IMR-90 (cell line): ENCODE measurements at regions of chr15 and their contacts with region 1.

Region 1: DNA sequence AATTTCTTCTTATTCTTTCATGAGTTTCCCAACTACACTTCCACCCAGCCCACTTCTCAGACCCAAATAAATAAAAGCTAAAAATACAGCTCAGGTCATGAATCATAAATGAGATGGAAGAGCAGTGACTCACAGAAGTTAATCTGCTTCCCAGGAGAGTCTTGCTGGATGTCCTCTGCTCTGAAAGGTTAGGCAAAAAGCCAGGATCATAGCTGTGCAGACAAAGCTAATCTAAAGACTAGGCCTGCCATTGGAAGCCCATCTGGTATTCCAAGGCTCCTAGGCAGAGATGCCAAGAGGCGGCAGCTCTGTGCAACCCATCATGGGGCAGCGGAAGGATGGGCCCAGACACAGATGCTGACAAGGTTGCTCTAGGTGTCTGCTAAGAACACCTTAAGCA is 24.0 kb downstream of the SHC4 start:
- DNase-seq: peak; percentile 99
- ATAC-seq: peak; percentile 66
- H3K4me3 ChIP-seq: no peak overlapping the region
- H3K27ac ChIP-seq: peak overlapping the region; percentile 36
- H3K4me1 ChIP-seq: peaks cover 24% of the 10 kb centered on the region
- H3K27me3 ChIP-seq: no peaks in the 10 kb centered on the region
- CTCF ChIP-seq: no peak
- POLR2A ChIP-seq: peak; percentile 44; the same call in 1 of the 2 replicates
- RAD21 ChIP-seq: no peak; the same call in 1 of the 2 replicates

Region 2: DNA sequence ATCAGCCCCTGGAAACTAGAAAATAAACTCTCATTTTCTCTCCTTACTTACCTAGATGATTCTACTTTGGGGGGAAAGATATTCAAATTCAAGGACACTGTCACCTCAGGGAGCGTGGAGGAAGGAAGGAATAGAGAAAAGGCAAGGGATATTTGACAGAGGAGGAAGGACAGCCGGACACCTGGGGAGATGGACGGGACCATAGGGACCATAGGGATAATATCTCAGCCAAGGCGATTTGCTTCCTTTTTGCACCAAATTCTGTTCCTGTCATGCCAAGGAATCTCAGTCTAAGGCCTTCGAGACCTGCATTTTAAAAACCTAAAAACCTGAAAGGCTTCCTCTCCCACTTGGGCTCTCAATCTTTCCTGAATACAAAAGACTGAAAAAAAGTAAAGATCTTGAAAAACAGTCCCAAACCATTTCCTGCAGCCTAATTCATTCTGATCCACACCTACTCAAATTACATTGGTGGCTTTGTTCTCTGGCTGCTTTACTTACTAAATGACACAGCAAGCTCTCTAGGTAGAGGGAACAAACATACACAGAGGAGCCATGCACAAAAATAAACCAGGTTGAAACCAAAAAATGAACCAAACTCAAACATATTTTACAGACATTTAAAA is 892.8 kb before region 1 on chr15:
- CTCF ChIA-PET with region 1: no interaction called
- POLR2A ChIA-PET with region 1: no interaction called
- dilution Hi-C with region 1: no loop called
- in situ Hi-C with region 1: no loop called
- intact Hi-C with region 1: no loop called
- DNase-seq: no peak
- ATAC-seq: no peak
- H3K4me3 ChIP-seq: no peak overlapping the region
- H3K27ac ChIP-seq: no peak overlapping the region
- H3K4me1 ChIP-seq: no peaks in the 10 kb centered on the region
- H3K27me3 ChIP-seq: no peaks in the 10 kb centered on the region; the same call in 1 of the 2 replicates
- CTCF ChIP-seq: no peak
- POLR2A ChIP-seq: no peak
- RAD21 ChIP-seq: no peak

Region 3: GRCh38 chr15:48888836-48889235 is 50.9 kb before region 1 on chr15:
- CTCF ChIA-PET with region 1: no interaction called
- POLR2A ChIA-PET with region 1: no interaction called
- dilution Hi-C with region 1: no loop called
- in situ Hi-C with region 1: no loop called
- intact Hi-C with region 1: loop called (anchors 5 kb)
- DNase-seq: no peak
- ATAC-seq: peak; percentile 39
- H3K4me3 ChIP-seq: no peak overlapping the region
- H3K27ac ChIP-seq: peak overlapping the region; percentile 23
- H3K4me1 ChIP-seq: peaks cover 14% of the 10 kb centered on the region
- H3K27me3 ChIP-seq: no peaks in the 10 kb centered on the region
- CTCF ChIP-seq: no peak
- POLR2A ChIP-seq: no peak
- RAD21 ChIP-seq: no peak

Region 4: GRCh38 chr15:48992545-48992944 is 52.9 kb after region 1 on chr15:
- CTCF ChIA-PET with region 1: no interaction called
- POLR2A ChIA-PET with region 1: no interaction called
- dilution Hi-C with region 1: no loop called
- in situ Hi-C with region 1: no loop called
- intact Hi-C with region 1: no loop called
- DNase-seq: no peak
- ATAC-seq: no peak
- H3K4me3 ChIP-seq: no peak overlapping the region
- H3K27ac ChIP-seq: no peak overlapping the region
- H3K4me1 ChIP-seq: peaks cover 4% of the 10 kb centered on the region; the same call in 1 of the 2 replicates
- H3K27me3 ChIP-seq: no peaks in the 10 kb centered on the region
- CTCF ChIP-seq: no peak
- POLR2A ChIP-seq: no peak
- RAD21 ChIP-seq: no peak

Region 5: GRCh38 chr15:49370782-49371181 is 431.1 kb after region 1 on chr15:
- CTCF ChIA-PET with region 1: no interaction called
- POLR2A ChIA-PET with region 1: no interaction called
- dilution Hi-C with region 1: no loop called
- in situ Hi-C with region 1: no loop called
- intact Hi-C with region 1: no loop called
- DNase-seq: peak; percentile 39
- ATAC-seq: no peak
- H3K4me3 ChIP-seq: no peak overlapping the region
- H3K27ac ChIP-seq: no peak overlapping the region
- H3K4me1 ChIP-seq: no peaks in the 10 kb centered on the region
- H3K27me3 ChIP-seq: no peaks in the 10 kb centered on the region
- CTCF ChIP-seq: peak; percentile 31; the same call in 1 of the 2 replicates
- POLR2A ChIP-seq: no peak
- RAD21 ChIP-seq: peak; percentile 40